ENCODE measurements at regions of chr6 and their contacts with region 1.

Region 1: DNA sequence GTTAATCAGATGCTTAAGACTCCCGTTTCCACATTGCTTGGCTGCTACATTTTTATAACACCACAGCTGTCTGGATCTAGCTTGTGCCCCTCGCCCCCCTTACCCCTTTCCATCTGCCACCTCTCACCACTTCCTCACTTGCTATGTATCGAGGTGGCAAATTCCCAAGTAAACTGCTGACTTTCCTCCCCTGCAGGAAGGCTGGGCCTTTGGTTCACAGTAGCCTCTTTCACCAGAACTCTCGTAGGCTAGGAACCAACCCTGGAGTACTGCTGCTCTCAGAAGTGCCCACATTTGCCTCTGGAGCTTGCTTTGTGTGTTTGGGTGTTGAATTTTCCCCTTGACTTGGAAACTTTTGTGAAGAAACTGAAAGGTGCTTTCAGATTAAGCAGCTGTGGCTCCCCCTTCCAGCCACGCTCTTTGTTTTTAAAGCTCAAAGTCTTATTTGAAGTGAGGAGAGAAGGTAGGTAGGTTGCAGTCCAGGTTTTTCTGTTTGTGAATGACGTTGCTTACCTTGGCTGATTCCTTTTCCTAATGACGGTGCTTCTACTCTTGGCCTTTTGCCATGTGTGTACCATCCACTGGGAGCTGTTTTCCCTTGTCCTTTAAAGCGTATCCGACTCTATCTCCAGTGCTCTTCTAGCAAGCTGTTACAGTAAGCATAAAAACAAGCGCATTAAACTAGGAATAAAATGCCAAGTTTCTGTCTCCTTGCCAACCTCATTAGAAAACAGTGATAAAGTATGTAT is 90.4 kb downstream of the CARMIL1 start:
- DNase-seq: peak in 8 of 10 donors; percentile 6 to 54 (median 19)
- ATAC-seq: peak; percentile 26 to 47
- H3K4me3 Mint-ChIP-seq: peak overlapping the region; percentile 65 to 97 (median 88)
- H3K27ac Mint-ChIP-seq: peak overlapping the region; percentile 90 to 99 (median 98)
- H3K4me1 Mint-ChIP-seq: peaks cover 43 to 85% (median 75%) of the 10 kb centered on the region in 4 donors
- H3K27me3 Mint-ChIP-seq: no peaks in the 10 kb centered on the region

Region 2: DNA sequence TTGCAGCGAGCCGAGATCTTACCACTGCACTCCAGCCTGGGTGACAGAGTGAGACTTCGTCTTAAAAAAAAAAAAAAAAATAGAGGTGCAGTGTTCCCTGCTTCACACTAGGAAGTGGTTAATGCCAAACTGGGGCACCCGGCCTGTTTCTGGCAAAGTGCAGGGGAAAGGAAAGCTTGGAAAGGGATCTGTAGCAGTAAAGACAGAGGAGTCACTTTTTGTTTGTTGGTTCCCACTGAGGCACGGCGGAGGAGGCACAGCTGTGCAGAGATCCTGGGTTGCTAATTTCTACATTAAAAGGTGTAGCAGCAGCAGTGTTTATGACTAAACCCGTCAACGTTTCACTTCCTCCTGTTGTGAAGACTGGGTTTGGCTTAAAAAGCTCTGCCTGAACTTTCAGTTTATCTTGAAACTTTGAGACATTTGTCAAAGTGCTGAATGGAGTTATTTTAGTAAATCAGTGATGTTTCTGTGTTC is 35.1 kb after region 1 on chr6:
- POLR2A ChIA-PET with region 1: interaction called, 52 read pairs
- DNase-seq: peak in 9 of 10 donors; percentile 0 to 68 (median 23)
- ATAC-seq: peak; percentile 89 to 90
- H3K4me3 Mint-ChIP-seq: no peak overlapping the region
- H3K27ac Mint-ChIP-seq: no peak overlapping the region
- H3K4me1 Mint-ChIP-seq: peaks cover 0 to 28% (median 6%) of the 10 kb centered on the region in 4 donors
- H3K27me3 Mint-ChIP-seq: no peaks in the 10 kb centered on the region

Region 3: DNA sequence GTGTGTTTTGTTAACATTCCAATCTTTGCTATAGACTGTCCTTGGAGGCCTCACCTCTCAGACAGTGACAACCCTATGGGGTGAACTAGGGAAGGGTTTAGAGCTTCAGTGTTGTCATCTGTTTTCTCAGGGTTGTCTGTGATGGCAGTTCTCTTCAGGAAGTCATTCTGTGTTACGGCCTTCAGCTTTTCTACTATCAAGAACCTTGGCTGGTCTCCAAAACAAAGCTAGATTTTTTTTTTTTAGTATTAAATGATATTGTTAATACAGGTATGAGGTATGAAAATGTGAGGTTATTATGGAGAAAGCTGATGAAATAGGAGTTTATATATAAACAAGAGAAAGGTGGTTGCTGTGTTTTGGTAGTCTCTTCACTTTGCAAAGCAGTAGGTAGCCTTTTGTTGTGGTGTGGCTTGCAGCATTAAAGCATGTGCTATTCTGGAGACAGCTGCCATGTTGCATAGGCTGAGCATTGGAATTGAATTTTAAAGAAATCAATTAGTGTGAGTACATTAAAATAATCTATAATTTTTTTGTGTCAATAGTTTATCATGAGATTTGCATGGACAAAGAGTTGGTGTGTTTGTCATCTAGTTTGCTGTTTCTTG is 72.2 kb after region 1 on chr6:
- POLR2A ChIA-PET with region 1: interaction called, 10 read pairs
- DNase-seq: peak in 7 of 10 donors; percentile 10 to 72 (median 48)
- ATAC-seq: peak; percentile 92 to 93
- H3K4me3 Mint-ChIP-seq: peak overlapping the region in 9 of 10 donors; percentile 5 to 78 (median 66)
- H3K27ac Mint-ChIP-seq: peak overlapping the region in 7 of 10 donors; percentile 92 to 98 (median 95)
- H3K4me1 Mint-ChIP-seq: peaks cover 6 to 36% (median 23%) of the 10 kb centered on the region in 4 donors
- H3K27me3 Mint-ChIP-seq: no peaks in the 10 kb centered on the region